ENCODE measurements at regions of chr3 and their contacts with region 1.

Region 1: GRCh38 chr3:30353711-30354467 is 252.5 kb upstream of the TGFBR2 start:
- DNase-seq: peak; percentile 74
- H3K4me3 Mint-ChIP-seq: no peak overlapping the region
- H3K27ac Mint-ChIP-seq: peak overlapping the region; percentile 59
- H3K4me1 Mint-ChIP-seq: peaks cover 72% of the 10 kb centered on the region
- H3K27me3 Mint-ChIP-seq: no peaks in the 10 kb centered on the region

Region 2: DNA sequence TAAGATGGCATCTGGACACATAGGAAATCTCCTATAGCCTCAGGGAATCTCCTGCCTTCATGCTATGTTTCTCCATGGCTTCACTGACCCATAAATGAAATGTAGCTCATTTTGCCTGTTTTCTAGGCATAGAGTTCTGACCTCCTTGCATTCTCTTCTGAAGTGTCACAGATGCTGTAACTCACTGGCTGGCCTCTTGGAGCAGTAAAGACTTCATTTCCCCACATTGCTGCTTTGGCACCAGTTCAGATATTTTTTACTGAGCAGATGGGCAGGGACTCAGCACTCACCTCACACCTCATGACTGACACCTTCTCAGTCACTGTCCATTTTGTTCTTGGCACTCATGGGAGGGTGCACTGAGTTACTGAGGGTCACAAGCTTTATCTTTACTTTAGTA is 34.2 kb before region 1 on chr3:
- CTCF ChIA-PET with region 1: interaction called, 3 read pairs
- intact Hi-C with region 1: loop called (anchors 1 kb)
- DNase-seq: peak; percentile 67
- H3K4me3 Mint-ChIP-seq: no peak overlapping the region
- H3K27ac Mint-ChIP-seq: peak overlapping the region; percentile 26
- H3K4me1 Mint-ChIP-seq: peaks cover 21% of the 10 kb centered on the region
- H3K27me3 Mint-ChIP-seq: no peaks in the 10 kb centered on the region

Region 3: DNA sequence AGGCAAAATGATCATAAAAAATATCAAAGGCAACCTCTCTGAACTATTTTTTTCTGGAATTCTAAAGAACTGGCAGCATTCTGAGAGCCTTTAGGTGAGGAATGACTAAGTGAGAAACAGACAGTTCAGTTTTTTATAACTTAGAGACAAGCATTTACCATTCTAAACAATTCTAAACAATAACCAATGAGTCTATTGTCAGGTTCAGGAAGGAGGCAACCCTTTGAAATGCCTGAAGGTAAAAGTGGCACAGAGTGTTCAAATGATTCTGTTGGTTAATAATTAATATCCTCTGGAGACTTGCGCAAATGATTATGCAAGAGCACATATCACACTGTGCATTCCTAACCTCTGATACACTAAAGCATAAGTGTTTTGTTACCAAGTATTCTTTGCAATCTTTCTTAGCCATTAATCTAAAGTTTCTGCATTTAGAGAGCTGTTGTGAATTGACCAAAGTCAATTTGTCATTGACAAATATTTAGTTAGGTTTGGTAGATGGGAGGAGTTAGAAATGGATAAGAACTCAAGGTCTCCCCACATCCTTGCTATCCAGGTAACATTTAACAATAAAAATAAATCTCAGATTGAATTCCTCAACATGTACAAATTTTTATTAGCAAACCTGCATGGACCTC is 243.4 kb after region 1 on chr3:
- CTCF ChIA-PET with region 1: no interaction called
- intact Hi-C with region 1: no loop called
- DNase-seq: no peak
- H3K4me3 Mint-ChIP-seq: no peak overlapping the region
- H3K27ac Mint-ChIP-seq: no peak overlapping the region
- H3K4me1 Mint-ChIP-seq: peaks cover 41% of the 10 kb centered on the region
- H3K27me3 Mint-ChIP-seq: no peaks in the 10 kb centered on the region